Common myeloid progenitor, CD34-positive (primary cell): ENCODE measurements at regions of chr12 and their contacts with region 1.

Region 1: DNA sequence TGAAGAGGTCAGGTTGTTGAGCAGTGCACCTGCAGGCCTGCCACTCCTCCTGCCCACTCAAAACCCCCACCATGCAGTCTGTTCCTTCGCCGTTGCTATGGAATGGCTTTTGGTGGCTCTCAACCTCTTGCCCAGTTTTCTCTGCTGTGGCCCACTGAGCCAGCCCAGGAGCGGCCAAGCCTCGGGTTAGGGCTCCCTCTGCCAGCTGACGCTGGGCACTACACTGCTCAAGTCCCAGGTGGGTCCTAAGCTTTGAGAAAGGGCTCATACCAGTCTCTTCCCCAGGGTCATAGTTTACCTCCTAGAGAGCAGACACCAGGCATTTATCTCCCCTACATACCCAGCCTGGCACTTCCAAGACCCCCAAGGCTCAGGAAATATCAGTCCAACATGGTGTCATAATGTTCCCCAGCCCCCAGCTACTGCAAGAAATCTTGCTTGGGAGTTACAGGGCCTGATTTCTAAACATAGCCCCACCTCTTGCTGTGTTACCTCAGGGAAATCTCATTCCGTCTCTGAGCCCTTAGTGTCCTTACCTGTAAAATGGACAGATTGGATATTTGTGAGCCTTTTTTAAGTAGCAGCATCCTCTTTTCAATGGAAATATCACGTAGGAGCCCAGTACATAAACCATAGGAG is 59.4 kb downstream of the TSPAN11 start:
- DNase-seq: peak; percentile 18 to 54 (median 47)
- H3K4me3 ChIP-seq: no peak overlapping the region
- H3K27ac ChIP-seq: no peak overlapping the region
- H3K4me1 ChIP-seq: peaks cover 0 to 18% (median 6%) of the 10 kb centered on the region in 4 experiments
- H3K27me3 ChIP-seq: no peaks in the 10 kb centered on the region

Region 2: DNA sequence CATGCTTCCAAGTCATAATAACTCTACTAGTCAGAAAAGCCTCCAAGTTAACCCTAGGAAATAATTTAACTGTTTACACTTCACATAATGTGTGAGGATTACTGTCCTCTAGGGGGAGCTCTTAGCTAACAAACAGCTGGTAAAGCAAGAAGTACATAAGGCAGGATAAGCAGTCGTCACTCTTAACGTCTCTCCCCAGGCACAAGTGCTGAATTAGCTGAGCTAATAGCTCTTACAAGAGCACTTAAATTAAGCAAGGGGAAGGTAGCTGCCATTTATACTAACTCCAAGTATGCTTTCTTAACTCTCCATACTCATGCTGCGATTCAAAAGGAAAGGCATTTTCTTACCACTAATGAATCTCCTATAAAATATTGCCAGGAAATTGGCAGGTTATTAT is 138.7 kb before region 1 on chr12:
- CTCF ChIA-PET with region 1: interaction called, 80 read pairs
- POLR2A ChIA-PET with region 1: interaction called, 5 read pairs
- DNase-seq: peak; percentile 65 to 82 (median 80)
- H3K4me3 ChIP-seq: no peak overlapping the region
- H3K27ac ChIP-seq: no peak overlapping the region
- H3K4me1 ChIP-seq: peaks cover 0 to 9% (median 1%) of the 10 kb centered on the region in 4 experiments
- H3K27me3 ChIP-seq: no peaks in the 10 kb centered on the region

Region 3: GRCh38 chr12:30945443-30946164 is 40.3 kb before region 1 on chr12:
- CTCF ChIA-PET with region 1: no interaction called
- POLR2A ChIA-PET with region 1: no interaction called
- DNase-seq: no peak
- H3K4me3 ChIP-seq: no peak overlapping the region
- H3K27ac ChIP-seq: no peak overlapping the region
- H3K4me1 ChIP-seq: peaks cover 0 to 2% (median 0%) of the 10 kb centered on the region in 4 experiments
- H3K27me3 ChIP-seq: peaks cover 0 to 2% (median 0%) of the 10 kb centered on the region in 5 experiments